Mucosa of descending colon (tissue), 3 donors: ENCODE measurements at regions of chr15 and their contacts with region 1.

Region 1: GRCh38 chr15:99704444-99704838 is 28.8 kb downstream of the LYSMD4 start:
- DNase-seq: peak in 1 of 3 donors; percentile 78
- ATAC-seq: peak; percentile 81
- H3K4me3 ChIP-seq: no peak overlapping the region
- H3K4me1 ChIP-seq: peaks cover 19% of the 10 kb centered on the region
- CTCF ChIP-seq: peak; percentile 66

Region 2: DNA sequence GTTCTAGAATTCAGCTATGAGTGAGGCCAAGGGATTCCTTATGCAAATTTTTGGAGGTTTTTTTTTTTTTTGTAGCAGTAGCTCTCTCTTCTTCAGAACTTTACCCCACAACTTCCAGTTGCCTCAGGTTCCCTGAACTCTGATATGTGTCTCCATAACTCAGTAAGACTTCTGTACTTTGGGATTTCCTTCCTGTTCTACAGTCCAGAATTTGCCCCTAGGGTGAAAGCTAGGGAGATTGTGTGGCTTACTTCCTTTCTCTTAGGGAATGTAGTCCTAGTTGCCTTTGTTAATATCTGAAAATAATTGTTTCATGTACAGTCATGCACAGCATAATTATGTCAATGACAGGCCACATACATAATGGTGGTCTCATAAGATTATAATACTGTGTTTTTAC is 422.3 kb before region 1 on chr15:
- intact Hi-C with region 1: loop called (anchors 5 to 10 kb)
- DNase-seq: no peak
- ATAC-seq: no peak
- H3K4me3 ChIP-seq: no peak overlapping the region
- H3K4me1 ChIP-seq: no peaks in the 10 kb centered on the region
- CTCF ChIP-seq: no peak

Region 3: GRCh38 chr15:99409097-99409473 is 295.4 kb before region 1 on chr15:
- intact Hi-C with region 1: loop called in 1 of 2 experiments (anchors 10 kb)
- DNase-seq: peak; percentile 73 to 79 (median 74)
- ATAC-seq: peak; percentile 96
- H3K4me3 ChIP-seq: no peak overlapping the region
- H3K4me1 ChIP-seq: no peaks in the 10 kb centered on the region
- CTCF ChIP-seq: peak; percentile 41

Region 4: DNA sequence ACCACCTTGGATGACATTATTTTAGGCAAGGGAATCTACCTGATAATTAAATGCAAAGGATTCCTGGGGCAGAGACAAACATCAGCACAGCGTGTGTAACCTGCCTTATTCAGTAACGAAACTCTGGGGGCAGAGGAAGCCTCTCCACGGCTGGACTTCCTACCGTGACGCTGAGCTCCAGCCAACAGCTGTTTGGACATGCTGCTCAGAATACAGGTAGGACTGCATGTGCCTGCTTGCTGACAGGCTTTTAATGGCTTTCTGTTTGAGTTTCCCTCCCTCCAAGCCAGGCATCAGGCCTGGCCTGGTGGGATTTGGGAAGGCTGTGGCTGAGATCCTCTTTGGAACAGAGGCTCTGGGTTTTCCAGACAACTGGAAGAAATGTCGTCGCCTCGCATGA is 486.7 kb after region 1 on chr15:
- intact Hi-C with region 1: no loop called
- DNase-seq: no peak
- ATAC-seq: no peak
- H3K4me3 ChIP-seq: no peak overlapping the region
- H3K4me1 ChIP-seq: peaks cover 2% of the 10 kb centered on the region
- CTCF ChIP-seq: no peak